Naive thymus-derived CD4-positive, alpha-beta T cell (primary cell): ENCODE measurements at regions of chr6 and their contacts with region 1.

Region 1: DNA sequence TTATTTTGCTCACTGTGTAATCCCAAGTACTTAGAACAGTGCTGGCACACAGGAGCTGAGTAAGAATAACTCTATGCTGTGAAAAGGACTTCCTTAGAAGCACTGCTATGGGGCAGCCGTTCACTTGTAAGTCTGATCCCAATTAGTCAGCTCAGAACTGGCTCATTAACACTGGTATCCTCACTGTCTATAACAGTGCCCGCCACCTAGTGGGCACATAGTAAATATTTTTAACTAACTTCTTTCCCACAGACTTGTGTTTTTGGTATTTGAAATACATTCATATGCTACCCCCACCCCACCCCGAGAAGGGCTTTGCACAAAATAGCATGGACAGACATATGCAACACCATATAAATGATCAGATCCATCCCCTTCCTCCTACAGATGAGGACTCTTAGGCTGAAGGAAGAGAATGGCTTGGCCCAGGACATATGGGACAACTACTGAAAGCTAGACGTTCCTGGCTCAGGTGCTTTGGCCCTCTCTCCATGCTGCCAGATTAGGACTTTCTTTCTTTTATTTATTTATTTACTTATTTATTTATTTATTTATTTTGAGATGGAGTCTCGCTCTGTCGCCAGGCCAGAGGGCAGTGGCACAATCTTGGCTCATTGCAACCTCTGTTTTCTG is 47.1 kb downstream of the DST start:
- DNase-seq: peak in 7 of 9 donors; percentile 10 to 39 (median 27)
- ATAC-seq: peak; percentile 83
- H3K4me3 ChIP-seq: no peak overlapping the region
- H3K4me3 Mint-ChIP-seq: peak overlapping the region in 1 of 10 donors; percentile 58
- H3K27ac ChIP-seq: no peak overlapping the region
- H3K27ac Mint-ChIP-seq: peak overlapping the region in 1 of 9 donors; percentile 42
- H3K4me1 ChIP-seq: no peaks in the 10 kb centered on the region
- H3K4me1 Mint-ChIP-seq: peaks cover 12 to 30% (median 28%) of the 10 kb centered on the region in 7 donors
- H3K27me3 ChIP-seq: no peaks in the 10 kb centered on the region
- H3K27me3 Mint-ChIP-seq: no peaks in the 10 kb centered on the region

Region 2: DNA sequence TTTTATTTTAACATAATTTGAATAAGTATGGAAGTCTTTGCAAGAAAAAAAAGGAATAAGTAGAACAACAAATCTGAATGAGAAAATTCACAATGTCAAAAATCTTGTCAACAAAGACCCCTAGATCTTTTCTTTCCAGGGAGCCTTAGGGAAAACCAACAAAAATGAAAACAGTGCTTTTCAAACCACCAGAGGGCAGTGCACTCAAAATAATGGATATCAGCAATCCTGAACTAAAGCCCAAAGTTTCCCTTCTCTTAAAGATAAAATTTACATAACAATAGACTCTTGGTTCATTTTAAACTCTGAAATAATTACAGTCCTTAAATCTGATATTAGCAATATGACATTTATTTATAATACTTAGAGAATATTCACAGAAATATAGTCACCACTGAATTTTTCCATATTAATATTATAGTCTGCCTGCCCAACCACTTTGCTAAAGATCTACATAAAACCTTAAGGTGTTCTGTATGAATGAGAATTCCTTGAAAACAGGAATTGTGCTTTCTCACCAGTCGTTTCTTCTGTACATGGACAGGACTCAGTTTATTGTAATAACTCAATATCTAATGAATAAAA is 614.9 kb before region 1 on chr6:
- CTCF ChIA-PET with region 1: no interaction called
- POLR2A ChIA-PET with region 1: no interaction called
- intact Hi-C with region 1: loop called in 1 of 2 experiments (anchors 5 kb)
- DNase-seq: no peak
- ATAC-seq: no peak
- H3K4me3 ChIP-seq: no peak overlapping the region
- H3K4me3 Mint-ChIP-seq: no peak overlapping the region
- H3K27ac ChIP-seq: no peak overlapping the region
- H3K27ac Mint-ChIP-seq: no peak overlapping the region
- H3K4me1 ChIP-seq: no peaks in the 10 kb centered on the region
- H3K4me1 Mint-ChIP-seq: no peaks in the 10 kb centered on the region
- H3K27me3 ChIP-seq: no peaks in the 10 kb centered on the region
- H3K27me3 Mint-ChIP-seq: no peaks in the 10 kb centered on the region

Region 3: DNA sequence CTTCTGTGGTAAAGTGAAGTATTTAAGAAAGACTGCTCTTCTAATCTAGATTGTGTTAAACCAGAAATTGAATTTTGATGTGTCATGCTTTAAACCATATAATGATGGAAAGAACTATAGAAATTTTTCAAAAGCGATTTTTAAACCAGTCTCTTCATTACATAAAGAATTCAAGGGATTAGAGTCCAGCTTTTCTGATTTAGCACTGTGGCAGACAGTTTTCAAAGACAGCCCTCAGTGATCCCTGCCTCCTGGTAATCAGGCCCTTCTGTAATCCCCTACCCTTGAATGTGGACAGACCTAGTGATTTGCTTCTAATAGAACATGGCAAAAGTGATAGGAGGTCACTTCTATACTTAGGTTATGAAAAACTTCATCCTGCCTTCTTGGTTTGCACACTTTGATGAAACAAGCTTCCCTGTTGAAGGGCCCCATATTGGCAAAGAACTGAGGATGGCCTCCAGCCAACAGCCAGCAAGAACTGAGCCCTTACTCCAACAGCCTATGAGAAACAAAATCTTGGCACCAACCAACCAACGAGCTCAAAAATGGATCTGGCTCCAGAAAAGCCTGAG is 144.4 kb before region 1 on chr6:
- CTCF ChIA-PET with region 1: no interaction called
- POLR2A ChIA-PET with region 1: no interaction called
- intact Hi-C with region 1: no loop called
- DNase-seq: no peak
- ATAC-seq: no peak
- H3K4me3 ChIP-seq: no peak overlapping the region
- H3K4me3 Mint-ChIP-seq: no peak overlapping the region
- H3K27ac ChIP-seq: no peak overlapping the region
- H3K27ac Mint-ChIP-seq: no peak overlapping the region
- H3K4me1 ChIP-seq: no peaks in the 10 kb centered on the region
- H3K4me1 Mint-ChIP-seq: peaks cover 0 to 2% (median 0%) of the 10 kb centered on the region in 7 donors
- H3K27me3 ChIP-seq: no peaks in the 10 kb centered on the region
- H3K27me3 Mint-ChIP-seq: no peaks in the 10 kb centered on the region

Region 4: GRCh38 chr6:56542364-56543331 is 53.0 kb before region 1 on chr6:
- CTCF ChIA-PET with region 1: interaction called, 4 read pairs
- POLR2A ChIA-PET with region 1: no interaction called
- intact Hi-C with region 1: loop called (anchors 1 to 5 kb)
- DNase-seq: peak; percentile 32 to 74 (median 59)
- ATAC-seq: peak; percentile 90
- H3K4me3 ChIP-seq: peak overlapping the region; percentile 69
- H3K4me3 Mint-ChIP-seq: no peak overlapping the region
- H3K27ac ChIP-seq: peak overlapping the region; percentile 38
- H3K27ac Mint-ChIP-seq: no peak overlapping the region
- H3K4me1 ChIP-seq: peaks cover 0 to 8% of the 10 kb centered on the region in 2 donors
- H3K4me1 Mint-ChIP-seq: peaks cover 0 to 2% (median 0%) of the 10 kb centered on the region in 7 donors
- H3K27me3 ChIP-seq: no peaks in the 10 kb centered on the region
- H3K27me3 Mint-ChIP-seq: peaks cover 0 to 3% (median 0%) of the 10 kb centered on the region in 5 donors

Region 5: DNA sequence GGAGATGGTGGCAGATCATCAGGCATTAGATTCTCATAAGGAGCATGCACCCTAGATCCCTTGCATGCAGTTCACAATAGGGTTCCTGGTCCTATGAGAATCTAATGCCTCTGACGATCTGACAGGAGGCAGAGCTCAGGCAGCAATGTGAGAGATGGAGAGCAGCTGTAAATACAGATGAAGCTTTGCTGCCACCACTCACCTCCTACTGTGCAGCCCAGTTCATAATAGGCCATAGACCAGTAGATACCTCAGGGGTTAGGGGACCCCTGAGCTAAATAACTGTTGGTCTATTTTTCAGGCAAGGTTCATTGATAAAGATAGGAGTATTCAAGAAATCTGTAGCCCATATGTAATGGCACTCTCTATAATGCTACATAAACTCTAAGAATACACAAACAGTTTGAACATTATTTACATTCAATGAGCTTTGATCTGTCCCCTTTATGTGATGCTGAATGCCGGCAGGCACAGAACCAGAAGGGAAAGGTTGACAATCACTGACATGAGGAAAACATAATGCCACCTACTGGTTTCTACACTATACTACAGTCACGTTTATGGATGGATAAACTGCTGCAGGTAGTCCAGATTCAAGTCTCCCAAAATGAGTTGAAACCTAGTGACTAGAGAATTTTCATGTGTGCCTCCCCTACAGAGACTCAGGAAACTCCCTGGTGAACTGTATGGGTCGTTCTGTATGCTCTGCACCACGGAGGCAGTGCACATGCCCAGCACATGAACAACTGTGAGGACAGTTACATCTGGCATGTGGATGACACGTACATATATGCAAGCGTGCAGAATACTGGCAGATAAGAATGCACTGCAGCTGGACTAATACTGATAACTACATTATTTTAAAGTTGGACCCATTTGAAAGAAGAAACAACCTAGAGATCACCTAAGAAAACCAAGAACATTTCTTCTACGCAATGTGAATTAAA is 24.9 kb before region 1 on chr6:
- CTCF ChIA-PET with region 1: interaction called, 5 read pairs
- POLR2A ChIA-PET with region 1: no interaction called
- intact Hi-C with region 1: loop called in 1 of 2 experiments (anchors 2 kb)
- DNase-seq: peak in 4 of 9 donors; percentile 14 to 24 (median 16)
- ATAC-seq: peak; percentile 50
- H3K4me3 ChIP-seq: no peak overlapping the region
- H3K4me3 Mint-ChIP-seq: no peak overlapping the region
- H3K27ac ChIP-seq: no peak overlapping the region
- H3K27ac Mint-ChIP-seq: no peak overlapping the region
- H3K4me1 ChIP-seq: no peaks in the 10 kb centered on the region
- H3K4me1 Mint-ChIP-seq: no peaks in the 10 kb centered on the region
- H3K27me3 ChIP-seq: no peaks in the 10 kb centered on the region
- H3K27me3 Mint-ChIP-seq: peaks cover 0 to 4% (median 0%) of the 10 kb centered on the region in 5 donors

Region 6: GRCh38 chr6:56984361-56984760 is 388.8 kb after region 1 on chr6:
- CTCF ChIA-PET with region 1: no interaction called
- POLR2A ChIA-PET with region 1: no interaction called
- intact Hi-C with region 1: no loop called
- DNase-seq: no peak
- ATAC-seq: no peak
- H3K4me3 ChIP-seq: no peak overlapping the region
- H3K4me3 Mint-ChIP-seq: no peak overlapping the region
- H3K27ac ChIP-seq: no peak overlapping the region
- H3K27ac Mint-ChIP-seq: no peak overlapping the region
- H3K4me1 ChIP-seq: no peaks in the 10 kb centered on the region
- H3K4me1 Mint-ChIP-seq: no peaks in the 10 kb centered on the region
- H3K27me3 ChIP-seq: peaks cover 0 to 3% of the 10 kb centered on the region in 2 donors
- H3K27me3 Mint-ChIP-seq: peaks cover 6 to 37% (median 24%) of the 10 kb centered on the region in 5 donors